ENCODE measurements at regions of chr5 and their contacts with region 1.

Region 1: GRCh38 chr5:145347026-145347616 is 488.0 kb downstream of the PRELID2 start:
- DNase-seq: no peak
- H3K4me3 ChIP-seq: no peak overlapping the region
- CTCF ChIP-seq: no peak
- POLR2A ChIP-seq: no peak

Region 2: GRCh38 chr5:146920351-146920881 is 1573.3 kb after region 1 on chr5:
- intact Hi-C with region 1: loop called (anchors 5 kb)
- DNase-seq: no peak
- H3K4me3 ChIP-seq: no peak overlapping the region
- CTCF ChIP-seq: no peak
- POLR2A ChIP-seq: no peak

Measured in lower leg skin (tissue), 4 donors.